ENCODE measurements at regions of chr7 and their contacts with region 1.

Region 1: GRCh38 chr7:134690016-134690415 is 43.4 kb downstream of the BPGM start:
- DNase-seq: no peak
- ATAC-seq: peak in 3 of 4 donors; percentile 31 to 74 (median 52)
- H3K4me3 ChIP-seq: peak overlapping the region; percentile 49
- H3K27ac ChIP-seq: no peak overlapping the region
- H3K4me1 ChIP-seq: peaks cover 3% of the 10 kb centered on the region
- H3K27me3 ChIP-seq: no peaks in the 10 kb centered on the region
- CTCF ChIP-seq: peak; percentile 41

Region 2: GRCh38 chr7:134432296-134433152 is 257.5 kb before region 1 on chr7:
- intact Hi-C with region 1: no loop called
- DNase-seq: peak; percentile 87 to 90
- ATAC-seq: peak; percentile 97 to 99 (median 98)
- H3K4me3 ChIP-seq: peak overlapping the region; percentile 62
- H3K27ac ChIP-seq: peak overlapping the region; percentile 82
- H3K4me1 ChIP-seq: peaks cover 7% of the 10 kb centered on the region
- H3K27me3 ChIP-seq: no peaks in the 10 kb centered on the region
- CTCF ChIP-seq: peak; percentile 70

Region 3: DNA sequence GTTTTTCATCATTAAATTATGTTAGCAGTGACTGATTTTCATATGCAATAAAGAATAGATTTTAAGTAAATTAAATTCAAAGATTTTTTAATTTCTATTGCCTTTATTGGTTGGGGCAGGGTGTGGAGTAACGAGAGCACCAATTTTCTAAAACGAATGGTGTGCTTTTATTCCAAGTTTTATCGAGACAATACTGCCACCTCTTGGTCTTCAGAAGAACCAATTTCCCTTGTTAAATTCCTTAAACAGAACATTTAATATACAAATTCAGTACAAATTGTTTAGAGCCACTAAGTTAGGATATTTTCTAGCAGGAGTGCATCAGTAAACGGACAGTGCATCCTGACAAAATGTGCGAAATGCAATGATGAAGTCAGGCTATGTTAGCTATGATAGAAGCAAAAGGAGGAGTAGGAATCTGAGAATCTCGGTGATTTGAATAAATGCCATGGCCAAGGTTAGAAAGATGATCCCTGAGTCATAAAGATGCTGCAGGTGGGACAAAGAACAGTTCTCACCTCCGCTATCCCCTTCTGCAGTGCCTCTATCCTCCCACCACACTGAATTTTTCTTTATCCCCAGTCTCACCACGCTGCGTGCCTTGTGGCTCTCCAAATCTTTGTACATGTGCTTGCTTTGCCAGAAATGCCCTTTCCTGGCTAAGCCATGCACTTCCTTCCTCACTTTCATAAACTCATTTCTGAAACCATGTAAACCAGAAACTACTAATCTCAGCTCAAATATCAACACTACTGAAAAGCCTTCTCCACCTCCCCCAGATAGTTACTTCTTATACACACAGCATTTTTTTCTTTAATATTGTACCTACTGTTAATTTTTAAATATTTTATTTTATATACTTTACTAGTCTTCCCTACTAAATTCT is 264.4 kb after region 1 on chr7:
- intact Hi-C with region 1: loop called in 1 of 2 experiments (anchors 5 kb)
- DNase-seq: no peak
- ATAC-seq: peak in 2 of 4 donors; percentile 44 to 60
- H3K4me3 ChIP-seq: no peak overlapping the region
- H3K27ac ChIP-seq: no peak overlapping the region
- H3K4me1 ChIP-seq: no peaks in the 10 kb centered on the region
- H3K27me3 ChIP-seq: no peaks in the 10 kb centered on the region
- CTCF ChIP-seq: peak; percentile 53